BJ (cell line): ENCODE measurements at regions of chr18 and their contacts with region 1.

Region 1: GRCh38 chr18:75226286-75226955 is 15.8 kb downstream of the TSHZ1 start:
- DNase-seq: no peak
- H3K4me3 ChIP-seq: peak overlapping the region; percentile 6
- H3K27me3 ChIP-seq: no peaks in the 10 kb centered on the region
- CTCF ChIP-seq: no peak

Region 2: GRCh38 chr18:75210274-75211001 is 16.0 kb before region 1 on chr18 and contains the start of gene TSHZ1:
- CTCF ChIA-PET with region 1: interaction called, 4 read pairs
- POLR2A ChIA-PET with region 1: interaction called, 18 read pairs
- DNase-seq: peak; percentile 76
- H3K4me3 ChIP-seq: peak within 1 kb of the TSS; percentile 68
- H3K27me3 ChIP-seq: no peaks in the 10 kb centered on the region
- CTCF ChIP-seq: no peak
- polyA plus RNA-seq, gene TSHZ1: 19.3 and 23.9 TPM in 2 replicates

Region 3: DNA sequence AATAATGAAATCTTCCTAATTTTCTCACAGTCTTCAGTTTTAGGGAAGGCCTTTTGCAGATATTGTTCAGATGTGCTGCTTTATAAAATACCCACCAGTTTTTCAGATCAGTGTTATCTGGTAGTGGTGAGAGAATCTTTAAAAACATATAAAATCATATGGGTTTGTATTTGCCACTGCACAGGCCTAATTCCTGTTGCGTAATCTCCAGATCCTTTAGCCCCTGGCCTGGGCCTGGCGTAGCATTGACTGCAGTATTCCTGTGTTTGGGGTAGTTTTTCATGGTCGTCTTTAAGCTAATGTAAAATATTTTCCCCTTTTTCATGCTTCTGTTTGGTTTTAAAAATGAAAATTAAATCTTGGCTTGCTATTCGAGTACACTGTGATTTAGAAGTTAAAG is 27.4 kb after region 1 on chr18:
- CTCF ChIA-PET with region 1: no interaction called
- POLR2A ChIA-PET with region 1: no interaction called
- DNase-seq: no peak
- H3K4me3 ChIP-seq: no peak overlapping the region
- H3K27me3 ChIP-seq: no peaks in the 10 kb centered on the region
- CTCF ChIP-seq: no peak

Region 4: DNA sequence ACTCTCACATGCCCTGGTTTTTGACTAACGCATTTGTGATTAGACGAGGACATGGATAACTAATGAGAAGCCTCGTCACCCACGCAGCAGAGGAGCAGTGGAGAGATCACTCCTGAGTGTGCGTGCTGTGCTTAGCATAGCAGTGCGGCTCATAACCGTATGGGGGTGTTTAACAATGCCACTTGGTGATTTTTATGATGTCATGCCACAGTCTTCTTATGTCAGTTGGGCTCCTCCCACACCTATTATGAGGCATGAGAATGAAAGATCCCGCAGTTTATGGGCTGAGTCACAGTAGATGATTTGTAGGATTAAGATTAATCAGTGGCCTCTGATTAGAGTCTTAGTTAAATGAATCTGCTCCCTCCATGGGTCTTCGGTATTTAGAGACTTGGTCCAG is 203.6 kb after region 1 on chr18:
- CTCF ChIA-PET with region 1: no interaction called
- POLR2A ChIA-PET with region 1: no interaction called
- DNase-seq: no peak
- H3K4me3 ChIP-seq: no peak overlapping the region
- H3K27me3 ChIP-seq: no peaks in the 10 kb centered on the region; the same call in none of the 2 replicates
- CTCF ChIP-seq: no peak

Region 5: GRCh38 chr18:75455249-75456198 is 229.1 kb after region 1 on chr18:
- CTCF ChIA-PET with region 1: no interaction called
- POLR2A ChIA-PET with region 1: interaction called, 11 read pairs
- DNase-seq: no peak
- H3K4me3 ChIP-seq: peak overlapping the region; percentile 28
- H3K27me3 ChIP-seq: no peaks in the 10 kb centered on the region
- CTCF ChIP-seq: no peak